ENCODE measurements at regions of chr3 and their contacts with region 1.

Region 1: DNA sequence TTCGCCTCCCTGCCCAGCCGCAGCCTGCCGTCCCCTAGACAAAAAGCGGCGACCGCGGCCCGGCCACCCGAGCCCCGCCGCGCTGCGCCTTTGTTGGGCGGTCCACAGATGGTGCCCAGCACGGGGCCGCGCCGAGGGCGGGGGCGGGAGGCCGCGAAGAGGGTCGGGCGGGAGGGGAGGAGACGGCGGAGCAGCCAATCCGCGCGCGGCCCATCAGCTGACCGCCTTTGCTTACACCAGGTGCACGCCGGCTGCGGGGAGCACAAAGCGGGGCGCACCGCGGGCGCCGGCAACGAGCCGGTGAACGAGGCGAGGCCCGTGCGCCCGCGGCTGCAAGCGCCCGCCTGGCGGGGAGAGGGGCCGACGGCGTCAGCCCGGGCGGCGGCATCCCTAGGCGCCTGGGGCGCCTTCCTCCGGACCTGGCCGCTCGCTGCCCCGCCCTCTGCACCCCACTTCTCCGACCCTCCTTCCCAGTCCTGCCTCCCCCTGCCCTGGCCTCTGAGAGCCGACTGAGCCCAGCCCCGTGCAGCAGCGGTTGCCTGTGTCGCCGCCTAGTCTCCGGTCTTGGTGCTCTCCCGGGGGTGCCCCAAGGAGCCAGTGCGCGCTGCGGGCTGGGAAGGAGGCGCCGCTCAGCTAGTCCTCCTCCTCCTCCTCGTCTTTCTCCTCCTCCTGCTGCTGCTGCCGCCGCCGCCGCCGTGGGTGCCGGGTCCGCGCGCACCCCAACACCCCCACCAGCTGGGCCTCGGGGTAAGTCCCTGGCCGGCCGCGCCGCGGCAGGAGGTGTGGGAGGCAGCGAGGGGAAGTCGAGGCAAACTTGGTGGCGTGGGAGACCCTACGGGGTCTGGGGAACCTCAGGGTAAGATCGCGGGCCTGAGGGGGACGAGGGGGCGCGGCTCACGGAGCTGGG is at the start of gene LRRN1:
- DNase-seq: peak; percentile 6 to 57 (median 38)
- ATAC-seq: peak; percentile 61
- H3K4me3 ChIP-seq: peak within 1 kb of the TSS; percentile 61
- H3K4me3 Mint-ChIP-seq: peak within 1 kb of the TSS; percentile 85 to 94 (median 92)
- H3K27ac ChIP-seq: peak within 1 kb of the TSS; percentile 55
- H3K27ac Mint-ChIP-seq: peak within 1 kb of the TSS in 7 of 9 donors; percentile 56 to 91 (median 81)
- H3K4me1 ChIP-seq: no peaks in the 10 kb centered on the region
- H3K4me1 Mint-ChIP-seq: peaks cover 8 to 26% (median 15%) of the 10 kb centered on the region in 7 donors
- H3K27me3 ChIP-seq: no peaks in the 10 kb centered on the region
- H3K27me3 Mint-ChIP-seq: peaks cover 33 to 60% (median 48%) of the 10 kb centered on the region in 5 donors
- total RNA-seq, gene LRRN1: 0.12 to 2.5 (median 1.8) TPM in 4 of 5 experiments, not detected in the other

Region 2: DNA sequence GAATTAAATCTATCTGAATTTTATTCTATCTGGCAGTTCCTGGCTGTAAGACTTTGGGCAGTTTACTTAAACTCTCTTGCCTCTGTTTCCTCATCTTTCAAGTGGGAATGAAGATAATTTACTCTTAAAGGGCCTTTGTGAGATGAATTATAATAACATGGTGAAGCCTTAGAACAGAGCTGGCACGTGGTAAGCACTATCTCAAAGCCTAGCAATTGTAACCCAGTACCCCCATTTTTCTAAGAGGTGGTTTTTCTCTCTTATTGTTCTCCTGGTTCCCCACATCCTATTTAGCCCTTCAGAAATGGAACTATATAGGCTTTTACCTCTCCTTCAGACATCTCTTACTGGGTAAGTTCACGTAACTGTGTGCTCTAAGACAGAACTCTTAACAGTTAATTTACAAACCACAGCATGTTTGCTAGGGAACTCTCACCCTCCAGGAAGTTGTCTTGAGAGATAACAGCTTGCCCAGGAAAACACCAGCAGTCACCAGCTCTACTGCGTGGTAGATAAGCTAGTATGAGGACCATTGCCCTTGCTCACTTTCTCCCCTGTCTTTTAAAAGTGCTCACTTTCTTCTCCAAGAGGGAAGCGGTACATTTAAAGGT is 607.6 kb before region 1 on chr3:
- CTCF ChIA-PET with region 1: no interaction called
- POLR2A ChIA-PET with region 1: interaction called, 4 read pairs
- intact Hi-C with region 1: loop called in 1 of 2 experiments (anchors 5 kb)
- DNase-seq: peak in 7 of 9 donors; percentile 25 to 58 (median 44)
- ATAC-seq: peak; percentile 89
- H3K4me3 ChIP-seq: peak overlapping the region; percentile 18
- H3K4me3 Mint-ChIP-seq: peak overlapping the region; percentile 54 to 92 (median 78)
- H3K27ac ChIP-seq: peak overlapping the region; percentile 66
- H3K27ac Mint-ChIP-seq: peak overlapping the region; percentile 39 to 98 (median 91)
- H3K4me1 ChIP-seq: peaks cover 20 to 42% of the 10 kb centered on the region in 2 donors
- H3K4me1 Mint-ChIP-seq: peaks cover 27 to 65% (median 60%) of the 10 kb centered on the region in 7 donors
- H3K27me3 ChIP-seq: no peaks in the 10 kb centered on the region
- H3K27me3 Mint-ChIP-seq: peaks cover 0 to 21% (median 0%) of the 10 kb centered on the region in 5 donors

Region 3: GRCh38 chr3:4030624-4031023 is 231.2 kb after region 1 on chr3:
- CTCF ChIA-PET with region 1: no interaction called
- POLR2A ChIA-PET with region 1: no interaction called
- intact Hi-C with region 1: no loop called
- DNase-seq: no peak
- ATAC-seq: no peak
- H3K4me3 ChIP-seq: no peak overlapping the region
- H3K4me3 Mint-ChIP-seq: no peak overlapping the region
- H3K27ac ChIP-seq: no peak overlapping the region
- H3K27ac Mint-ChIP-seq: no peak overlapping the region
- H3K4me1 ChIP-seq: no peaks in the 10 kb centered on the region
- H3K4me1 Mint-ChIP-seq: no peaks in the 10 kb centered on the region
- H3K27me3 ChIP-seq: no peaks in the 10 kb centered on the region
- H3K27me3 Mint-ChIP-seq: no peaks in the 10 kb centered on the region

Region 4: DNA sequence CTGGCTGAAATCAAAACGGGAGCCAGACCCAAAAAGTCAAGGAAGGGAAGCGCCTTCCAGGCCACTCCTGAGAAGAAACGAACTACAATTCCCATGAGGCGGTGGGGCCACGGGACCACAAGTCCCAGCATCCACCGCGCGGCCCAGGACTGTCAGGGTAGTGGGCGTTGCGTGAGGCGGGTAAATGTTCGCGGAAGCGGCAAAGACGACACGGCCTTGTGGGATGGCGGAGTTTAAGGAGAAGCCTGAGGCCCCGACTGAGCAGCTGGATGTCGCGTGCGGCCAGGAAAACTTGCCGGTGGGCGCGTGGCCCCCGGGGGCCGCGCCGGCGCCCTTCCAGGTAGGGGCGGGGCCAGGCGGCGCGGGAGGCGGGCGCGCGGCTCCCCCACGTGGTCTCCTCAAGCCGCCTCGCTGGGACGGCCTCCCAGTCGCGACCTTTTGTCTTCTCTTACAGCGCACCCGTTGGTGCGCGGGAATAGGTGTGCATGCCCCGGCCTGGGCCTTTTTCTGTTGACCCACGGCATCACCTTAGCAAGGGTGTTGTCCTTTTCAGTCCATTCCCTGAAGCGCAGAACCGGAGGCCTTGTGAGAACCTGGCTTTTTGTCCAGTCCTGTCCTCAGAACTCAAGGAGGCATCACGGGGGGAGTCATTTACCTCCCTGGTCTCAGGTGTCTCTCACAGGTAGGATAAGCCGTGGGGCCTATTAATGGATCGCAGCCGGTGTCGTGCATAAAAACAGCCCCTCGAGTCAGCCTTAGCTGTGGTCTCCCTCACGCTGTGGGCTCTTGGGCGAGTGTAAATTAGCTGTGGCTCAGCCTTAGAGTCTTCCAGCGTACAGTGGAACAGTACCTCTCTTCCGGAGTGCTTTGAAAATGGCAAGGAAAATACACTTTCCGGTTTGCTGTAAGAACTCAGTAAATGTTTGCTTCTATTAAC is 504.0 kb after region 1 on chr3 and contains the start of gene SETMAR:
- CTCF ChIA-PET with region 1: interaction called, 3 read pairs
- POLR2A ChIA-PET with region 1: no interaction called
- intact Hi-C with region 1: loop called in 1 of 2 experiments (anchors 2 kb)
- DNase-seq: peak; percentile 73 to 86 (median 82)
- ATAC-seq: peak; percentile 97
- H3K4me3 ChIP-seq: peak within 1 kb of the TSS; percentile 92
- H3K4me3 Mint-ChIP-seq: peak within 1 kb of the TSS; percentile 88 to 99 (median 97)
- H3K27ac ChIP-seq: peak within 1 kb of the TSS; percentile 91
- H3K27ac Mint-ChIP-seq: peak within 1 kb of the TSS; percentile 92 to 99 (median 98)
- H3K4me1 ChIP-seq: peaks cover 0 to 8% of the 10 kb centered on the region in 2 donors
- H3K4me1 Mint-ChIP-seq: peaks cover 8 to 45% (median 34%) of the 10 kb centered on the region in 7 donors
- H3K27me3 ChIP-seq: no peaks in the 10 kb centered on the region
- H3K27me3 Mint-ChIP-seq: no peaks in the 10 kb centered on the region
- total RNA-seq, gene SETMAR: 6.4 to 13.7 (median 12.5) TPM